Activated CD4-positive, alpha-beta memory T cell treated with anti-CD3 and anti-CD28 coated beads for 36 hours (primary cell): ENCODE measurements at regions of chr4 and their contacts with region 1.

Region 1: GRCh38 chr4:177403746-177404145 is 38.5 kb downstream of the AGA start:
- DNase-seq: no peak
- H3K4me3 Mint-ChIP-seq: no peak overlapping the region
- H3K27ac Mint-ChIP-seq: no peak overlapping the region
- H3K4me1 Mint-ChIP-seq: peaks cover 36% of the 10 kb centered on the region
- H3K27me3 Mint-ChIP-seq: peaks cover 1% of the 10 kb centered on the region

Region 2: DNA sequence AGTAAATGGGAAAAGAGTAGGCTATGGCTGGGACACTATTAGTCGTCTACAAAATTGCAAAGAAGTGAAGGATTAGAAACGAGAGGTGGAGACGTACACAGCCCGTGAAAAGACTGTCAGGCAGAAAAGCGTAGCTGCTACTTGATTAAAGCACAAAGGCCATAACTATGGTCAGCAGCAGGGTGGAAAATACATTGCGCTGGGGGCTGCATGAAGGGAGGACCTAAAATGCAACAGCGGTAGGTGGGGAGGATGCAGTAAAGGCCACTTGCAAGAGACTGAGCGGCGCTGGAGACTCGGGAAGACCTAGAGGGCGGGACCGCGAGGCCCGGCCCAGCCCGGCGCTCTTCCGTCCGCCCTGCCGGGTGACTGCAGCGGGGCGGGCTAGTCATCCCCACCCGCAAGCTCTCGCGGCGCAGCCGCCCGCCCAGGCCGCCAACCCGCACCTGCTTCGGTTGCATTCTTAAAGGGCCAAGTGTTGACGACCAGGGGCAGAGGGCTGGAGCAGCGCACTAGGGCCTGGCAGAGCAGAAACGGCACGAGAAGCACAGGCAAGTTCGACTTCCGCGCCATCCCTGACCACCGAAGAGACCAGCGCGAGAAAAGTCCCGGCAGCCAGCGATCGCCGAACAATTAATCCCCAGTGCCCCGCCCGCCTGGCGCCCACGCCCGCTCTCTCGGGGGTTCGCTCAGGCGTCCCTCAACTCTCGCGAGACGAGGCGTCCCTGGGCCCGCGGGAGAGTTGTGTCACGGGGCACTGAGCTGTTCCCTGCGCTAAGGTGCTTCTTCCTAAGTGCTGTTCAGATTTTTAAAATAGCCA is 38.3 kb after region 1 on chr4 and contains the start of gene AGA:
- CTCF ChIA-PET with region 1: no interaction called
- POLR2A ChIA-PET with region 1: interaction called, 3 read pairs
- intact Hi-C with region 1: loop called (anchors 1 kb)
- DNase-seq: peak; percentile 97
- H3K4me3 Mint-ChIP-seq: peak within 1 kb of the TSS; percentile 90
- H3K27ac Mint-ChIP-seq: peak within 1 kb of the TSS; percentile 97
- H3K4me1 Mint-ChIP-seq: peaks cover 24% of the 10 kb centered on the region
- H3K27me3 Mint-ChIP-seq: no peaks in the 10 kb centered on the region
- total RNA-seq, gene AGA: 22.1 to 22.5 TPM